ENCODE measurements at regions of chr20 and their contacts with region 1.

Region 1: GRCh38 chr20:34876162-34877001 is at the start of gene ACSS2:
- DNase-seq: peak; percentile 100
- H3K4me3 Mint-ChIP-seq: peak within 1 kb of the TSS; percentile 87
- H3K27ac Mint-ChIP-seq: peak within 1 kb of the TSS; percentile 85
- H3K4me1 Mint-ChIP-seq: peaks cover 59% of the 10 kb centered on the region
- H3K27me3 Mint-ChIP-seq: no peaks in the 10 kb centered on the region
- total RNA-seq, gene ACSS2: 71.3 to 73.6 TPM

Region 2: GRCh38 chr20:34825530-34826362 is 50.6 kb before region 1 on chr20 and contains the start of gene NCOA6:
- CTCF ChIA-PET with region 1: no interaction called
- intact Hi-C with region 1: loop called (anchors 1 kb)
- DNase-seq: peak; percentile 88
- H3K4me3 Mint-ChIP-seq: peak within 1 kb of the TSS; percentile 97
- H3K27ac Mint-ChIP-seq: peak within 1 kb of the TSS; percentile 93
- H3K4me1 Mint-ChIP-seq: peaks cover 37% of the 10 kb centered on the region
- H3K27me3 Mint-ChIP-seq: no peaks in the 10 kb centered on the region
- total RNA-seq, gene NCOA6: 13.9 to 14.1 TPM

Region 3: GRCh38 chr20:34848597-34848996 is 27.8 kb before region 1 on chr20:
- CTCF ChIA-PET with region 1: no interaction called
- intact Hi-C with region 1: no loop called
- DNase-seq: no peak
- H3K4me3 Mint-ChIP-seq: no peak overlapping the region
- H3K27ac Mint-ChIP-seq: no peak overlapping the region
- H3K4me1 Mint-ChIP-seq: no peaks in the 10 kb centered on the region
- H3K27me3 Mint-ChIP-seq: no peaks in the 10 kb centered on the region

Region 4: GRCh38 chr20:34891166-34892062 is 15.0 kb after region 1 on chr20:
- CTCF ChIA-PET with region 1: interaction called, 18 read pairs
- intact Hi-C with region 1: loop called (anchors 1 kb)
- DNase-seq: peak; percentile 71
- H3K4me3 Mint-ChIP-seq: peak overlapping the region; percentile 16
- H3K27ac Mint-ChIP-seq: peak overlapping the region; percentile 87
- H3K4me1 Mint-ChIP-seq: peaks cover 48% of the 10 kb centered on the region
- H3K27me3 Mint-ChIP-seq: no peaks in the 10 kb centered on the region

Region 5: GRCh38 chr20:34964486-34964885 is 88.1 kb after region 1 on chr20:
- CTCF ChIA-PET with region 1: interaction called, 122 read pairs
- intact Hi-C with region 1: loop called (anchors 1 kb)
- DNase-seq: no peak
- H3K4me3 Mint-ChIP-seq: no peak overlapping the region
- H3K27ac Mint-ChIP-seq: peak overlapping the region; percentile 37
- H3K4me1 Mint-ChIP-seq: peaks cover 6% of the 10 kb centered on the region
- H3K27me3 Mint-ChIP-seq: no peaks in the 10 kb centered on the region

Region 6: GRCh38 chr20:35207950-35208611 is 331.7 kb after region 1 on chr20:
- CTCF ChIA-PET with region 1: interaction called, 5 read pairs
- intact Hi-C with region 1: loop called (anchors 1 kb)
- DNase-seq: peak; percentile 91
- H3K4me3 Mint-ChIP-seq: no peak overlapping the region
- H3K27ac Mint-ChIP-seq: no peak overlapping the region
- H3K4me1 Mint-ChIP-seq: no peaks in the 10 kb centered on the region
- H3K27me3 Mint-ChIP-seq: no peaks in the 10 kb centered on the region

Measured in activated naive CD4-positive, alpha-beta T cell treated with anti-CD3 and anti-CD28 coated beads for 36 hours (primary cell).